ENCODE measurements at regions of chr6 and their contacts with region 1.

Region 1: DNA sequence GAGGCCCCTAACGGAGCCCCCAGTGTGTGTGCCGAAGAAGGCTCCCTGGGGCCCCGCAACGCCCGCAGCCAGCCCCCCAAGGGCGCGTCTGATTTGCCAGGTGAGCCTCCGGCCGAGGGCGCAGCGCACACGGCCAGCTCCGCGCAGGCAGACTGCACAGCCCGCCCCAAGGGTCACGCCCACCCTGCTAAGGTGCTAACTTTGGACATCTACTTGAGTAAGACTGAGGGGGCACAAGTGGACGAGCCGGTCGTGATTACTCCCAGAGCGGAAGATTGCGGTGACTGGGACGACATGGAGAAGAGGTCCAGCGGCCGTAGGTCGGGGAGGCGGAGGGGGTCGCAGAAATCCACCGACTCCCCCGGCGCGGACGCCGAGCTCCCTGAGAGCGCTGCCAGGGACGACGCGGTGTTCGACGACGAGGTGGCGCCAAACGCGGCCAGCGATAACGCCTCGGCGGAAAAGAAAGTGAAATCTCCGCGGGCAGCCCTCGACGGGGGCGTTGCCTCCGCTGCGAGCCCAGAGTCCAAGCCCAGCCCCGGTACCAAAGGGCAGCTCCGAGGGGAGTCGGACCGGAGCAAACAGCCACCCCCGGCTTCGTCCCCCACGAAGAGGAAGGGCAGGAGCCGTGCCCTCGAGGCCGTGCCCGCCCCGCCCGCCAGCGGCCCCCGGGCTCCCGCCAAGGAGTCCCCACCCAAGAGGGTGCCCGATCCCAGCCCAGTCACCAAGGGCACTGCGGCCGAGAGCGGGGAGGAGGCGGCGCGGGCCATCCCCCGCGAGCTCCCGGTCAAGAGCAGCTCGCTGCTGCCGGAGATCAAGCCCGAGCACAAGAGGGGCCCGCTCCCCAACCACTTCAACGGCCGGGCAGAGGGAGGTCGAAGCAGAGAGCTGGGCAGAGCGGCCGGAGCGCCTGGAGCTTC is 117.0 kb downstream of the RTN4IP1 start:
- DNase-seq: peak; percentile 84
- H3K4me3 ChIP-seq: peak overlapping the region; percentile 84
- H3K27ac ChIP-seq: peak overlapping the region; percentile 88
- H3K4me1 ChIP-seq: peaks cover 41% of the 10 kb centered on the region
- CTCF ChIP-seq: peak; percentile 53

Region 2: DNA sequence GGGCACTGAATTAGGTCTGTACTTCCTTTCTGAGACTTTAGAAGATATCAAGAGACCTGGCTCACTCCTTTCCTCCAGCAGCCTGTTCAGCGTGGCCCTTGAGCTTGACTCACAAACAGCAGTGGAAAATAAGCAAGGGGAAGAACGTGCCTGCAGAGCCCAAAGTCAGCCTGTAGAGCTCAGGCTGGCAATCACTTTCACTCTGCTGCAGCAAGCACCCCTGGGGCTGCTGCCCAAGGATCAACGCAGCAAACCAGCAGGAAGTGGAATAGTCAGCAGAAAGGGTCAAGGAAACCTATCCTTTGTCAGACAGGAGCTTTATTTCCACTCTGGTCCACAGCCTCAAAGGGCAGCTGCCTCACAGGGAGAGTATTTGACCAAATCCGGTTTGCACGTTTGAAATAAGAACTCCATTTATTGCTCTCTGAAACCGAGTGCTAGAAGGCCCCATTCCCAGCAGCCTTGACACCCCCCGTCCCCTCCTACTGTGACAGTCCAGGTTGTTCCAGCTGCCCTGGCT is 348.8 kb before region 1 on chr6:
- CTCF ChIA-PET with region 1: no interaction called
- POLR2A ChIA-PET with region 1: no interaction called
- intact Hi-C with region 1: loop called (anchors 10 kb)
- DNase-seq: peak; percentile 74
- H3K4me3 ChIP-seq: peak overlapping the region; percentile 34
- H3K27ac ChIP-seq: peak overlapping the region; percentile 73
- H3K4me1 ChIP-seq: peaks cover 58% of the 10 kb centered on the region
- CTCF ChIP-seq: no peak

Region 3: GRCh38 chr6:106525111-106525881 is 13.0 kb after region 1 on chr6:
- CTCF ChIA-PET with region 1: interaction called, 7 read pairs
- POLR2A ChIA-PET with region 1: interaction called, 157 read pairs
- intact Hi-C with region 1: loop called (anchors 1 kb)
- DNase-seq: peak; percentile 78
- H3K4me3 ChIP-seq: peak overlapping the region; percentile 72
- H3K27ac ChIP-seq: peak overlapping the region; percentile 95
- H3K4me1 ChIP-seq: peaks cover 51% of the 10 kb centered on the region
- CTCF ChIP-seq: no peak

Region 4: GRCh38 chr6:106556368-106556960 is 44.2 kb after region 1 on chr6:
- CTCF ChIA-PET with region 1: interaction called, 4 read pairs
- POLR2A ChIA-PET with region 1: interaction called, 5 read pairs
- intact Hi-C with region 1: loop called (anchors 1 kb)
- DNase-seq: peak; percentile 56
- H3K4me3 ChIP-seq: no peak overlapping the region
- H3K27ac ChIP-seq: no peak overlapping the region
- H3K4me1 ChIP-seq: no peaks in the 10 kb centered on the region
- CTCF ChIP-seq: peak; percentile 91

Region 5: DNA sequence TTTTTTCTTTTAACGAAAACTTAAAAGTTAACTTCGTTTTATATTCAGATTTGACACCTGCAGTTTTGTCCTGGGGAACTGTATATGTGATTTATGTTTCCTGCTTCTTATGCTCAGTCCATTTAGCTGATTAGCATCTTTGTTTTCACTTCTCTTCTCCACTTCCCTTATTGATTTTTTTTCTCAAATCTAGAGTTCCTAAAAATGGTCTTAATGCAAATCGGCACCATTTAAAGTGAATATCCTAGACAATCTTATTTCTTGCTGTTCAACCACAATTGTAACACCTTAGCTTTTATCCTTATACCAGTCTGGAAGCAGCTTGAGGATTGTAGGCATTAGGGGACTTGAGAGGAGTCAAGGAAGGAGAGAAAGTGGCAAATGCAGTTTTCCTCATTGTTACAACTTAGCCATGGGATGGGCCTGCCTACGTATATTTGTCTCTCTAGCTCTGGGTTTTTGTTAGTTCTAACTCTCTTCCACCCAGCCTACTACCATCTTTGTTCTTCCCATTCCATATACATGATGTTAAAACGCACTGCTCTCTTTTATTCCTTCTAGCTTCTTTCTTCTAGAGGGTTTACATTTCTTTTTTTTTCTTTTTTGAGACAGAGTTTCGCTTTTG is 125.5 kb after region 1 on chr6:
- CTCF ChIA-PET with region 1: no interaction called
- POLR2A ChIA-PET with region 1: interaction called, 11 read pairs
- intact Hi-C with region 1: no loop called
- DNase-seq: peak; percentile 90
- H3K4me3 ChIP-seq: peak overlapping the region; percentile 57
- H3K27ac ChIP-seq: peak overlapping the region; percentile 99
- H3K4me1 ChIP-seq: peaks cover 84% of the 10 kb centered on the region
- CTCF ChIP-seq: no peak

Region 6: DNA sequence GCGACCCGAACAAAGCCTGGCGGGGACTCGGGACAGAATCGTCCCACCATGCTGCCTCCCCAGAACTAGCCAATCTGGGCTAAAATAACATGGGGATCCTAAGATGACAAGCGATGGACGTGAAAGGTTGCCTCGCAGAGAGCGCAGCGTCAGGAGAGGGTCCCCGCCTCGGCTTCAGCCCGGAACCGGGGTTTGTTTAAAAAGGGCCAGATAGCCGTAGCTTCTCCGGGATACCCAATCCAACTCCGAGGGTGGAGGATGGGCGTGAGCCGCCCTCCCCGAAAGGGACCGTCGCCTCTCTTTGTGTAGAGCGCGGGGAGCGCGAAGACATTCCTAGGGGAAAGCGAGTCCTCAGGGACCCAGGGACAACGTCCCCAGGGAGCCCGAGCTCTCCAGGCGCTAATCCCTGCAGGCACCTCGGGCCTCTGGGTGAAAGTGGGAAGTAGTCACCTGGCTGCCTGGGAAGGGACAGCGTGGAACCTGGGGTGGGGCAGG is 461.6 kb after region 1 on chr6:
- CTCF ChIA-PET with region 1: interaction called, 3 read pairs
- POLR2A ChIA-PET with region 1: interaction called, 4 read pairs
- intact Hi-C with region 1: loop called (anchors 2 kb)
- DNase-seq: peak; percentile 67
- H3K4me3 ChIP-seq: peak overlapping the region; percentile 84
- H3K27ac ChIP-seq: peak overlapping the region; percentile 74
- H3K4me1 ChIP-seq: peaks cover 34% of the 10 kb centered on the region
- CTCF ChIP-seq: no peak